CD8-positive, alpha-beta memory T cell (primary cell): ENCODE measurements at regions of chr16 and their contacts with region 1.

Region 1: GRCh38 chr16:3718019-3718391 is 681 bp upstream of the TRAP1 start:
- DNase-seq: no peak
- H3K4me3 ChIP-seq: peak overlapping the region; percentile 78
- H3K4me3 Mint-ChIP-seq: peak overlapping the region; percentile 76 to 95 (median 81)
- H3K27ac ChIP-seq: peak overlapping the region; percentile 93
- H3K27ac Mint-ChIP-seq: peak overlapping the region; percentile 76 to 96 (median 89)
- H3K4me1 ChIP-seq: peaks cover 15% of the 10 kb centered on the region
- H3K4me1 Mint-ChIP-seq: peaks cover 28 to 41% (median 35%) of the 10 kb centered on the region in 3 donors
- H3K27me3 ChIP-seq: no peaks in the 10 kb centered on the region
- H3K27me3 Mint-ChIP-seq: no peaks in the 10 kb centered on the region

Region 2: DNA sequence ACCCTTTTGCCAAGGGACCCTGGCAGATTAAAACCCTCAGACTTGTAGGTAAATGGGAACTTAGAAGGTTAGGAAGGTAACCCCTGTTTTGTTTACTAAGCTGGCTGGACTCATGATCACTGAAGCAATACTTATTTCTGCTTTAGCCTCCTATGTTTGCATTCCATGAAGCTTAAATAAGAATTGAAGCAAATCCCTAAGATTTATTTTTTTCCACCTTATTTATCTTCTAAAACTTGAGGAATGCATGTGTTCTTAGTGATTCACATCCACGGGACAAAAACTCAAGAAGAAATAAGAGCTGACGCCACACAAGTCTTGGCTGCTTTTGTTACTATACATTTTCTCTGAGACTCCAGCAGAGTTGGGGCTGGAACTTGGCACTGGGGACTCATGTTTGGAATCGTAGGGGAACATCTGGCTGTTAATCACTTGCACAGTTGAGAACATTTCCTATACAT is 181.7 kb before region 1 on chr16:
- CTCF ChIA-PET with region 1: no interaction called
- POLR2A ChIA-PET with region 1: interaction called, 10 read pairs
- DNase-seq: no peak
- H3K4me3 ChIP-seq: no peak overlapping the region
- H3K4me3 Mint-ChIP-seq: no peak overlapping the region
- H3K27ac ChIP-seq: no peak overlapping the region
- H3K27ac Mint-ChIP-seq: peak overlapping the region in 2 of 8 donors; percentile 77 to 90
- H3K4me1 ChIP-seq: no peaks in the 10 kb centered on the region
- H3K4me1 Mint-ChIP-seq: peaks cover 6 to 18% (median 8%) of the 10 kb centered on the region in 3 donors
- H3K27me3 ChIP-seq: no peaks in the 10 kb centered on the region
- H3K27me3 Mint-ChIP-seq: peaks cover 0 to 3% of the 10 kb centered on the region in 2 donors

Region 3: DNA sequence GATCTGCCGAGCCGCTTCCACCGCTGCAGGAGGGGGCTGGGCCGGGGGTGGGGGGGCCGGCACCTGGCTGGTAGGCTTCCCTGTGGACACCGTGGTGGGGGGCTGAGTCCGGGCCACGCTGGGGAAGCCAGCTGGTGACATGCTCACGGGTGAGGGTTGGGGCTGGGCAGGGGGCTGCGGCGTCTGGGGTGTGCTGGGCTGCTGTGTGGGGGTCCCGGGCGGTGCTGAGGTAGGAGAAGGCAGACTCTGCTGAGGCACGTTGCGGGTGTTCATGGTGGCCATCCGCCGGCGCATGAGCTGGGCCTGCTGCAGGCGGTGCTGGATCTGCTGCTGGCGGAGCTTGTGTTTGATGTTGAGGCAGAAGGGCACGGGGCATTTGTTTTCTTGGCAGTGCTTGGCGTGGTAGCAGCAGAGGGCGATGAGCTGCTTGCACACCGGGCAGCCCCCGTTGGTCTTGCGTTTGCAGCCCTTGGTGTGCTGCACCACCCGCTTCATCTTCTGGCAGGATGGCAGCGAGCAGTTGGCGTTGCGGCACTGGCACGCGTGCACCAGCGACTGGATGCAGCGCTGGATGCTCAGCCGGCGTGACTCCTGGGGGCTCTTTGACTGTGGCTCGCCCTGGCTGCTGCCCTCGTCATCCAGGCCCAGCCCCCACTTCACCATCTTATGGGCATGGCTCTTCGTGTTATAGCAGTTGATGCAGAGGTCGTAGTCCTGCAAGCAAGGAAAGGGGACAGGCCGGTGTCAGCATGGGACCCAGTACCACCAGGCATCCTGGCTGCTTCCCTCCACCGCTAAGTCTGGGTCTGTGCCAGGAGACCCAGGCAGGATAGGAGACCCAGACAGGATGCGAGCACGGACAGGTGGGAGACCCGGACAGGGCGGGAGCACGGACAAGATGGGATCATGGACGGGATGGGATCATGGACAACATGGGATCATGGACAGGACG is 11.4 kb after region 1 on chr16:
- CTCF ChIA-PET with region 1: no interaction called
- POLR2A ChIA-PET with region 1: no interaction called
- DNase-seq: no peak
- H3K4me3 ChIP-seq: no peak overlapping the region
- H3K4me3 Mint-ChIP-seq: no peak overlapping the region
- H3K27ac ChIP-seq: no peak overlapping the region
- H3K27ac Mint-ChIP-seq: peak overlapping the region in 1 of 8 donors; percentile 42
- H3K4me1 ChIP-seq: no peaks in the 10 kb centered on the region
- H3K4me1 Mint-ChIP-seq: peaks cover 0 to 4% (median 4%) of the 10 kb centered on the region in 3 donors
- H3K27me3 ChIP-seq: no peaks in the 10 kb centered on the region
- H3K27me3 Mint-ChIP-seq: no peaks in the 10 kb centered on the region

Region 4: GRCh38 chr16:3780570-3780969 is 62.6 kb after region 1 on chr16:
- CTCF ChIA-PET with region 1: no interaction called
- POLR2A ChIA-PET with region 1: no interaction called
- DNase-seq: peak in 2 of 5 donors; percentile 6 to 29
- H3K4me3 ChIP-seq: no peak overlapping the region
- H3K4me3 Mint-ChIP-seq: no peak overlapping the region
- H3K27ac ChIP-seq: no peak overlapping the region
- H3K27ac Mint-ChIP-seq: peak overlapping the region in 1 of 8 donors; percentile 58
- H3K4me1 ChIP-seq: no peaks in the 10 kb centered on the region
- H3K4me1 Mint-ChIP-seq: peaks cover 12 to 43% (median 33%) of the 10 kb centered on the region in 3 donors
- H3K27me3 ChIP-seq: no peaks in the 10 kb centered on the region
- H3K27me3 Mint-ChIP-seq: peaks cover 0 to under 1% of the 10 kb centered on the region in 2 donors

Region 5: DNA sequence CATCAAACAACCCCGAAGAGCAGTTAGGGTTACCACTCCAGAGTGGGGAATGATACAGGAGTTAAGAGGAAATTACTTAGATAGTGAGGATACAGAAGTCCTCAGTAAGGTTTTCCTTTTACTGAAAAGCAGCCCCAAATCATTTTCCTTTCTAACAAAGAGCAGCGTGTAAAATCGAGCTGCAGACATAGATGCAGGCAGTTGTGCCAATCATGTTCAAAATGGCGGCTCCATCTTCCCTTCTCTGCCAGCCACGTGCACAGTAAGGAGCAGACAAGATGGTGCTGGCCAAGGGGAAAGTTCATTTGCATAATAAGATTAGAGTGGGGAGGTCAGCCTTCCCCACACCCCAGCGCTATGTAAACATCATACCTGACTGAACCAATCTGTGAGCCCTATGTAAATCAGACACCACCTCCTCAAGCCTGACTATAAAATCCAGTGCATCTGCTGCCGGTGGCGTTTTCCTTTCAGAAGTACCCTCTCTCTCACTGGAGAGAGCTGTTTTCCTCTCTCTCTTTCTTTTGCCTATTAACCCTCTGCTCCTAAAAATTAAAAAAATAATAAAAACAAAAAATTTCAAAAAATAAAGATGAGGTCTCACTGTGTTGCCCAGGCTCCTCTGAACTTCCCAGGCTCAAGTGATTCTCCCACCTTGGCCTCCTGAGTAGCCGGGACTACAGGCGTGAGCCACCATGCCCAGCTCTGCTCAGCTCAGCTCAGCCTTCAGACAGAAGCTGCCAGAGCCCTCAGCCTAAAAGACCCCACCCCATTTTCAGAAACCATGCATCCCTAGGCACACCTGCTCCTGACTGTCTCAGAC is 526.5 kb after region 1 on chr16:
- CTCF ChIA-PET with region 1: no interaction called
- POLR2A ChIA-PET with region 1: interaction called, 13 read pairs
- DNase-seq: no peak
- H3K4me3 ChIP-seq: no peak overlapping the region
- H3K4me3 Mint-ChIP-seq: no peak overlapping the region
- H3K27ac ChIP-seq: no peak overlapping the region
- H3K27ac Mint-ChIP-seq: no peak overlapping the region
- H3K4me1 ChIP-seq: no peaks in the 10 kb centered on the region
- H3K4me1 Mint-ChIP-seq: no peaks in the 10 kb centered on the region
- H3K27me3 ChIP-seq: no peaks in the 10 kb centered on the region
- H3K27me3 Mint-ChIP-seq: peaks cover 8 to 14% of the 10 kb centered on the region in 2 donors